ENCODE measurements at regions of chr2 and their contacts with region 1.

Region 1: DNA sequence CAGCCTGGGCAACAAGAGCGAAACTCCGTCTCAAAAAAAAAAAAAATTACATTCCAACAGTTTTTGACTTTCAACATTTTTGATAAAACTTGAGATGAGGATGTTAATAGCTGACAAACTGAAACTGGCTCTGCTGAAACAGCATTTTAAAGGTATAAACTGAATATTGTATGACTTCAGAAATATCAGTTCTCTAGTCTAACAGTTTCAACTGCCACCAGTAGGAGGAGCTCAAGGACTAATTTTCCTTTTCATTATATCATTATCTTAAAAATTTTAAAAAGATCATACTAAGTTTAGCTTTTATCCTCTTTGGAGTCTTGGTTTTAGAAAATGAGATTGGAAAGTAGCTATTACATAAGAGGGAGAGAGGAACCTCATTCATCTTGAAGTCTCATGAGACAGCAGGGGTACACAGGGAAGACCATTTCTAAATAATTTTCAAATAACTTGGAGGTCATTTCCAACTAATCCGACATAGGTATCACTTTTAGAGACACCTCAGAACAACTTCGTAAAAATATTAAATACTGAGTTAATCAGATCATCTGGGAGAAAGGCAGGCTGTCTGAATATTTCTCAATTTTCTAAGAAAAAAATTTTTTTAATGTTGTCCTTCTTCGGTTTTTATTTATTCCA is 37.6 kb upstream of the MCM6 start:
- DNase-seq: no peak
- H3K4me3 ChIP-seq: no peak overlapping the region
- H3K27ac ChIP-seq: no peak overlapping the region
- H3K4me1 ChIP-seq: no peaks in the 10 kb centered on the region
- H3K27me3 ChIP-seq: no peaks in the 10 kb centered on the region
- CTCF ChIP-seq: peak in 2 of 3 experiments; percentile 36 to 47; a peak in 2 of 4 replicates
- EP300 ChIP-seq: no peak
- POLR2A ChIP-seq: no peak
- RAD21 ChIP-seq: peak; percentile 59 to 75

Region 2: DNA sequence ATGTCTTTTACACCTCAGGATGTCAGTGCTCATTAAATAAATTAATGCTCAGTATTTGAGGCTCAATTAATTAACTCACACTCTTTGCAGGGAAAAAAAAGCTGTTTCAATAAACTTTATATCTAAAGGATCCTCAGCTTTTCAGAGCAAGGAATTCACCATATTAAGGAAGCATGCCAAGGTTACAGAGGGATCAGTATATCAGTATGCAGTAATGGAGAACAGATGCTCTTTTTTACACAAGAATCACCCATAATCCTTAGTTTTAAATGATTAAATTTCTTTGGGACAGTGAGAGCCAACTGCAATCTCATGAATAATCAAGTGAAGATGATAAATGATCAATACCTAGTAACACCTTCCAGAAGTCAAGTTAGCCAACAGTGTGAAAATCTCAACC is 62.0 kb before region 1 on chr2:
- CTCF ChIA-PET with region 1: no interaction called
- POLR2A ChIA-PET with region 1: no interaction called
- DNase-seq: no peak
- H3K4me3 ChIP-seq: no peak overlapping the region
- H3K27ac ChIP-seq: no peak overlapping the region
- H3K4me1 ChIP-seq: no peaks in the 10 kb centered on the region
- H3K27me3 ChIP-seq: no peaks in the 10 kb centered on the region
- CTCF ChIP-seq: no peak
- EP300 ChIP-seq: no peak
- POLR2A ChIP-seq: no peak
- RAD21 ChIP-seq: no peak

Region 3: DNA sequence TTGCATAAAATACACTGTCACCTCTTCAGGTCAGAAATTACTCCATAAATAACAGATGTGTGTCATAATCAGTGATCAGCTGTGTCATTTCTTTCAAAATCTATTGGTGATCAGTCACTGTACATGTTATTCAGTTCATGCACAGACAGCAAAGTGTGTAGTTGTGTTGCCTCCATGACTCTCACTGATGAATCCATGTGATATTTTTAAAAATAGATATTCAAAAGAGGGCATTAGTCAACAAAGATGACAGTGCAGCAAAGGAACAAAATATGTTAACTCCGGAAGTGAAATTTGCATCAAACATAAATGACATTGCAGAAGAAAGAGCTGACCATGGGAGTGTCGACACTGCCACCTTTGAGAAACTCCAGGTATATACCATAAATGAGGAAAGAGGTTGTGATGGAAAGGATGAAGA is 20.5 kb before region 1 on chr2:
- CTCF ChIA-PET with region 1: interaction called, 25 read pairs
- POLR2A ChIA-PET with region 1: no interaction called
- DNase-seq: no peak
- H3K4me3 ChIP-seq: no peak overlapping the region
- H3K27ac ChIP-seq: no peak overlapping the region
- H3K4me1 ChIP-seq: peaks cover 0 to 4% (median 0%) of the 10 kb centered on the region in 4 experiments; a peak in 3 of 7 replicates
- H3K27me3 ChIP-seq: no peaks in the 10 kb centered on the region
- CTCF ChIP-seq: no peak
- EP300 ChIP-seq: no peak
- POLR2A ChIP-seq: no peak
- RAD21 ChIP-seq: no peak

Region 4: GRCh38 chr2:135931776-135932443 is 18.1 kb after region 1 on chr2:
- CTCF ChIA-PET with region 1: interaction called, 17 read pairs
- POLR2A ChIA-PET with region 1: no interaction called
- DNase-seq: no peak
- H3K4me3 ChIP-seq: no peak overlapping the region
- H3K27ac ChIP-seq: no peak overlapping the region
- H3K4me1 ChIP-seq: peaks cover 0 to 2% (median 0%) of the 10 kb centered on the region in 4 experiments; a peak in 1 of 7 replicates
- H3K27me3 ChIP-seq: no peaks in the 10 kb centered on the region
- CTCF ChIP-seq: no peak
- EP300 ChIP-seq: no peak
- POLR2A ChIP-seq: no peak
- RAD21 ChIP-seq: no peak

Region 5: DNA sequence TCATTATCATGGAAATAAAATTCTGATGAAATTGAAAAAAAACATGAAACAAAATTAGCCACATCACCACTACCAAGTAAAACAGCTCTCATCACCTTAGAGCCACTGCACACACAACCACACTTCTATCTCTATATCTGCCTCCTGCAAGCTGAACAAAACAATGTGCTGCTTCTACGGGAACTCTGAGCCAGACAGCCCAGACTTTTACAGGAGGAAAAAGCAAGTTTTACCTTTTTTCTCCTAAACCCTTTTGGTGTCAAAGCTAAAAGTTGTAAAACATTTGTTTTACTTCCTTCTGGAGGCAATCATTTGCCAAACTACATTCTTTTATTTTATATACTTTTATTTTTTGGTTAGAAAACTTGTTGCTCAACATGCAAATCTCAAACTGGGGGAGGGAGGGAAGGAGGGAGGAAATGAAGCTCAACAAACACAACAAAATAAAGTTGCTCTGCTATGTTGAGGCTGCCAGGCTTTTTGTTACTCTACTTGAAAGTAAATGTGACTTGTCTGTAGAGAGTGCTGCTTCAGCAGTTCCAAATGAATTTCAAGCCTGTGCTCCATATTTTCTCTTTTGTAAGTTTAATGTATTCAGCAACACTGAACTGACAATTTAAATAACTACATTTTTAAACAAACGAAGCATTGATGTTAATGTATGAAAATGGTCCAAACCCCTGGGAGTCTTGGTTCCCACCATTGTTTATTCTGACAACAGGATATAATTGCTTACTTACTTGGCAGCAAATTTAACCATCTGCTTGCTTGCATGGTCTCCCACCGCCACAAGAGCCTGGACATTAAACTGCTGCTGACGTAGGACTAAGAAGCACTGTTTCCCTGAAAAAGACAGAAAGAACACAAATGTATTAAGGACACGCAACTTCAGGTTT is 47.1 kb after region 1 on chr2:
- CTCF ChIA-PET with region 1: interaction called, 12 read pairs
- POLR2A ChIA-PET with region 1: no interaction called
- DNase-seq: no peak
- H3K4me3 ChIP-seq: peak overlapping the region in 1 of 4 experiments; percentile 28; a peak in 1 of 8 replicates
- H3K27ac ChIP-seq: peak overlapping the region; percentile 35; the same call in 1 of the 2 replicates
- H3K4me1 ChIP-seq: peaks cover 0 to 7% (median 5%) of the 10 kb centered on the region in 4 experiments; a peak in 4 of 7 replicates
- H3K27me3 ChIP-seq: no peaks in the 10 kb centered on the region
- CTCF ChIP-seq: no peak
- EP300 ChIP-seq: no peak
- POLR2A ChIP-seq: no peak
- RAD21 ChIP-seq: no peak

Region 6: GRCh38 chr2:136384531-136385303 is 470.9 kb after region 1 on chr2:
- CTCF ChIA-PET with region 1: interaction called, 144 read pairs
- POLR2A ChIA-PET with region 1: no interaction called
- DNase-seq: no peak
- H3K4me3 ChIP-seq: no peak overlapping the region
- H3K27ac ChIP-seq: no peak overlapping the region
- H3K4me1 ChIP-seq: no peaks in the 10 kb centered on the region
- H3K27me3 ChIP-seq: no peaks in the 10 kb centered on the region
- CTCF ChIP-seq: peak; percentile 69 to 87 (median 77)
- EP300 ChIP-seq: no peak
- POLR2A ChIP-seq: no peak
- RAD21 ChIP-seq: peak; percentile 92 to 95

Measured in H1 (cell line).